CD4-positive, alpha-beta memory T cell (primary cell): ENCODE measurements at regions of chr2 and their contacts with region 1.

Region 1: GRCh38 chr2:42095923-42096408 is 48.1 kb downstream of the PKDCC start:
- DNase-seq: peak; percentile 68 to 76 (median 74)
- H3K4me3 ChIP-seq: no peak overlapping the region
- H3K4me3 Mint-ChIP-seq: no peak overlapping the region
- H3K27ac ChIP-seq: no peak overlapping the region
- H3K27ac Mint-ChIP-seq: peak overlapping the region; percentile 22 to 97 (median 80)
- H3K4me1 ChIP-seq: peaks cover 54% of the 10 kb centered on the region
- H3K4me1 Mint-ChIP-seq: peaks cover 37 to 59% (median 46%) of the 10 kb centered on the region in 4 donors
- H3K27me3 ChIP-seq: no peaks in the 10 kb centered on the region
- H3K27me3 Mint-ChIP-seq: no peaks in the 10 kb centered on the region

Region 2: GRCh38 chr2:41869542-41870264 is 226.3 kb before region 1 on chr2:
- CTCF ChIA-PET with region 1: interaction called, 357 read pairs
- POLR2A ChIA-PET with region 1: no interaction called
- intact Hi-C with region 1: no loop called
- DNase-seq: peak; percentile 56 to 69 (median 63)
- H3K4me3 ChIP-seq: no peak overlapping the region
- H3K4me3 Mint-ChIP-seq: no peak overlapping the region
- H3K27ac ChIP-seq: no peak overlapping the region
- H3K27ac Mint-ChIP-seq: peak overlapping the region in 3 of 7 donors; percentile 22 to 49 (median 45)
- H3K4me1 ChIP-seq: peaks cover 25% of the 10 kb centered on the region
- H3K4me1 Mint-ChIP-seq: peaks cover 10 to 55% (median 27%) of the 10 kb centered on the region in 4 donors
- H3K27me3 ChIP-seq: no peaks in the 10 kb centered on the region
- H3K27me3 Mint-ChIP-seq: peaks cover 0 to 4% of the 10 kb centered on the region in 2 donors

Region 3: GRCh38 chr2:42169100-42169873 is 73.3 kb after region 1 on chr2 and contains the start of gene EML4:
- CTCF ChIA-PET with region 1: interaction called, 60 read pairs
- POLR2A ChIA-PET with region 1: interaction called, 66 read pairs
- intact Hi-C with region 1: loop called (anchors 1 kb)
- DNase-seq: peak; percentile 82 to 94 (median 89)
- H3K4me3 ChIP-seq: peak within 1 kb of the TSS; percentile 71 to 81
- H3K4me3 Mint-ChIP-seq: peak within 1 kb of the TSS in 5 of 8 donors; percentile 48 to 71 (median 65)
- H3K27ac ChIP-seq: peak within 1 kb of the TSS; percentile 95
- H3K27ac Mint-ChIP-seq: peak within 1 kb of the TSS in 3 of 7 donors; percentile 84 to 95 (median 94)
- H3K4me1 ChIP-seq: peaks cover 29% of the 10 kb centered on the region
- H3K4me1 Mint-ChIP-seq: peaks cover 0 to 28% (median 14%) of the 10 kb centered on the region in 4 donors
- H3K27me3 ChIP-seq: no peaks in the 10 kb centered on the region
- H3K27me3 Mint-ChIP-seq: no peaks in the 10 kb centered on the region
- total RNA-seq, gene EML4: 168 to 172 TPM

Region 4: DNA sequence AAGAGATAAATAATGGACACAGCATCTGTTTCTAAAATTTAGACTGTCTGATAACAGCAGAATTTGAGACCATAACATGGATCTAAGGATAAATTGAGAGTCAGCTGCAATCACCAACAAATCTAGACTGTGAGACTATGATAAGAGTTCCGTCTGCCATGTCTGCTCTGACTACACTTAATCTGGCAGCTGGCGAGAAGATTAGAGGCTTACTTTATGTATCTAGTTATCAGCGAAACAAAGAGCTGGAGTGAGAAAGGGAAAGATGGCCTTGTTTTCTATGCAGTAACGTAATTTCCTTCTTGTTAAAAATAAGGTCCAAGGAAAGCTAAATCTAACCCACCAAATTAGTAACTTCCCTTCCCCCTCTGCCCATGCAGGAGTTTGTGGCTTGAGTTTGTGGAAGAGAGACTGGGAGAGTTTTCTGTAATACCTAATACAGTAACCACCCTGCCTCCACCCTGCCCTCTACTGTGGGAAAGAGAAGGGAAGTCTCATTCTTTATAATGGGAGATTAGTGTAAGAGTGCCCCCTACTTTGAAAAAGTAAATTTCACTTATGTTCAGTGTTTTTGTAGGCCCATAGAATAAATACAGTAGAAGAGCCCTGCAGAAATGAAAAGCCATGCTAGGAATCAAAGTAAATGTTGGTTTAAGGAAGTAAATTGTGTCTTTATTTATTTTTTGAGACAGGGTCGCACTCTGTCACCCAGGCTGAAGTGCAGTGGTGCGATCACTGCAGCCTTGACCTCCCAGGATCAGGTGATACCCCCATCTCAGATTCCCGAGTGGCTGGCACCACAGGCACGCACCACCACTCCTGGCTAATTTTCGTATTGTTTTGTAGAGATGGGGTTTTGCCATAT is 100.7 kb after region 1 on chr2:
- CTCF ChIA-PET with region 1: interaction called, 128 read pairs
- POLR2A ChIA-PET with region 1: interaction called, 5 read pairs
- intact Hi-C with region 1: loop called (anchors 1 kb)
- DNase-seq: peak; percentile 56 to 66 (median 63)
- H3K4me3 ChIP-seq: no peak overlapping the region
- H3K4me3 Mint-ChIP-seq: peak overlapping the region in 7 of 8 donors; percentile 7 to 67 (median 51)
- H3K27ac ChIP-seq: no peak overlapping the region
- H3K27ac Mint-ChIP-seq: peak overlapping the region; percentile 40 to 87 (median 74)
- H3K4me1 ChIP-seq: peaks cover 97% of the 10 kb centered on the region
- H3K4me1 Mint-ChIP-seq: peaks cover 59 to 94% (median 74%) of the 10 kb centered on the region in 4 donors
- H3K27me3 ChIP-seq: no peaks in the 10 kb centered on the region
- H3K27me3 Mint-ChIP-seq: no peaks in the 10 kb centered on the region

Region 5: GRCh38 chr2:42230891-42231290 is 134.9 kb after region 1 on chr2:
- CTCF ChIA-PET with region 1: interaction called, 99 read pairs
- POLR2A ChIA-PET with region 1: no interaction called
- intact Hi-C with region 1: no loop called
- DNase-seq: no peak
- H3K4me3 ChIP-seq: no peak overlapping the region
- H3K4me3 Mint-ChIP-seq: peak overlapping the region in 4 of 8 donors; percentile 44 to 62 (median 56)
- H3K27ac ChIP-seq: no peak overlapping the region
- H3K27ac Mint-ChIP-seq: peak overlapping the region; percentile 25 to 72 (median 55)
- H3K4me1 ChIP-seq: peaks cover 90% of the 10 kb centered on the region
- H3K4me1 Mint-ChIP-seq: peaks cover 50 to 84% (median 71%) of the 10 kb centered on the region in 4 donors
- H3K27me3 ChIP-seq: no peaks in the 10 kb centered on the region
- H3K27me3 Mint-ChIP-seq: no peaks in the 10 kb centered on the region

Region 6: GRCh38 chr2:42249887-42250286 is 153.9 kb after region 1 on chr2:
- CTCF ChIA-PET with region 1: interaction called, 13 read pairs
- POLR2A ChIA-PET with region 1: interaction called, 3 read pairs
- intact Hi-C with region 1: no loop called
- DNase-seq: no peak
- H3K4me3 ChIP-seq: no peak overlapping the region
- H3K4me3 Mint-ChIP-seq: peak overlapping the region in 1 of 8 donors; percentile 36
- H3K27ac ChIP-seq: no peak overlapping the region
- H3K27ac Mint-ChIP-seq: peak overlapping the region in 2 of 7 donors; percentile 30 to 47
- H3K4me1 ChIP-seq: peaks cover 52% of the 10 kb centered on the region
- H3K4me1 Mint-ChIP-seq: peaks cover 58 to 72% (median 67%) of the 10 kb centered on the region in 4 donors
- H3K27me3 ChIP-seq: no peaks in the 10 kb centered on the region
- H3K27me3 Mint-ChIP-seq: no peaks in the 10 kb centered on the region

Region 7: GRCh38 chr2:42663106-42663780 is 567.3 kb after region 1 on chr2:
- CTCF ChIA-PET with region 1: no interaction called
- POLR2A ChIA-PET with region 1: no interaction called
- intact Hi-C with region 1: loop called (anchors 2 kb)
- DNase-seq: peak; percentile 52 to 60 (median 56)
- H3K4me3 ChIP-seq: no peak overlapping the region
- H3K4me3 Mint-ChIP-seq: no peak overlapping the region
- H3K27ac ChIP-seq: no peak overlapping the region
- H3K27ac Mint-ChIP-seq: peak overlapping the region in 1 of 7 donors; percentile 14
- H3K4me1 ChIP-seq: no peaks in the 10 kb centered on the region
- H3K4me1 Mint-ChIP-seq: peaks cover 0 to 4% (median 1%) of the 10 kb centered on the region in 4 donors
- H3K27me3 ChIP-seq: no peaks in the 10 kb centered on the region
- H3K27me3 Mint-ChIP-seq: no peaks in the 10 kb centered on the region